Activated B cell treated with CpG ODN at 0.5 μM for 24 hours (primary cell): ENCODE measurements at regions of chr1 and their contacts with region 1.

Region 1: GRCh38 chr1:171566467-171566866 is 55.6 kb upstream of the MYOCOS start:
- DNase-seq: no peak
- ATAC-seq: no peak
- H3K4me3 Mint-ChIP-seq: no peak overlapping the region
- H3K27ac Mint-ChIP-seq: no peak overlapping the region
- H3K4me1 Mint-ChIP-seq: no peaks in the 10 kb centered on the region
- H3K27me3 Mint-ChIP-seq: no peaks in the 10 kb centered on the region
- CTCF ChIP-seq: no peak

Region 2: DNA sequence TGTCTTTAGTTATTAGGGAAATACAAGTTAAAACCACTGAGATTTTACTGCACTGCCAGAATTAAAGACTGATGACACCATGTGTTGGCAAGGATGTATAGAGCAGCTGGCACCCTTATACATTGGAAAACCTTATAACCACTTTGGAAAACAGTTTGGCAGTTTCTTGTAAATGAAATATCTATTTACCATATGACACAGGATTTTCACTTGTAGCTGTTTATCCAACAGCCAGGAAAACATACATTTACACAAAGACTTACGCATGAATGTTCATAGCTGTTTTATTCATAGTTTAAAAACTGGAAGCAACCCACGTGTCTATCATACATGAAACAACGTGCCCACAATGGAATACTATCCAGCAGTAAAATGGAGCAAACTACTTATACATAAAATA is 35.8 kb before region 1 on chr1:
- CTCF ChIA-PET with region 1: no interaction called
- POLR2A ChIA-PET with region 1: no interaction called
- intact Hi-C with region 1: loop called (anchors 5 kb)
- DNase-seq: no peak
- ATAC-seq: no peak
- H3K4me3 Mint-ChIP-seq: no peak overlapping the region
- H3K27ac Mint-ChIP-seq: no peak overlapping the region
- H3K4me1 Mint-ChIP-seq: no peaks in the 10 kb centered on the region
- H3K27me3 Mint-ChIP-seq: no peaks in the 10 kb centered on the region
- CTCF ChIP-seq: no peak

Region 3: DNA sequence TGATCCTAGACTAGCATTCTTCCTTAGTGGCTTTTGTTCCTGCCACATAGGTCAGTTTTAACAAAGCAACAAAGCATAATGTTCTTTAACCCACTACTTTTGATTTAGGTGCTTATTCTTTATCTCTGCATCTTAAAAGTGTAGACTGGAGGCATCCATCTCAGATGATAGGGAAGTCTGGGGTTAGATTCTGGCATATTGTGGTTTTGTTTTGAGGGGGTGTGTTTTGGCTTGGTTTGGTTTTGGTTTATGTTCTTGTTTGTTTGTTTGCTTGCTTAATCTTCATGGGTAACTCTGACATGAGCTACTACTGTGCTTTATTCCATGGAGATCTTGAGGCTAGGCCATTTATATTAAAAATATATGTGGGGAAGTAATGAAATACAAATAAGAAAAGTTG is 15.3 kb after region 1 on chr1:
- CTCF ChIA-PET with region 1: no interaction called
- POLR2A ChIA-PET with region 1: no interaction called
- intact Hi-C with region 1: loop called (anchors 2 kb)
- DNase-seq: no peak
- ATAC-seq: no peak
- H3K4me3 Mint-ChIP-seq: no peak overlapping the region
- H3K27ac Mint-ChIP-seq: peak overlapping the region; percentile 15
- H3K4me1 Mint-ChIP-seq: no peaks in the 10 kb centered on the region
- H3K27me3 Mint-ChIP-seq: no peaks in the 10 kb centered on the region
- CTCF ChIP-seq: no peak